AG04450 (cell line): ENCODE measurements at regions of chr2 and their contacts with region 1.

Region 1: DNA sequence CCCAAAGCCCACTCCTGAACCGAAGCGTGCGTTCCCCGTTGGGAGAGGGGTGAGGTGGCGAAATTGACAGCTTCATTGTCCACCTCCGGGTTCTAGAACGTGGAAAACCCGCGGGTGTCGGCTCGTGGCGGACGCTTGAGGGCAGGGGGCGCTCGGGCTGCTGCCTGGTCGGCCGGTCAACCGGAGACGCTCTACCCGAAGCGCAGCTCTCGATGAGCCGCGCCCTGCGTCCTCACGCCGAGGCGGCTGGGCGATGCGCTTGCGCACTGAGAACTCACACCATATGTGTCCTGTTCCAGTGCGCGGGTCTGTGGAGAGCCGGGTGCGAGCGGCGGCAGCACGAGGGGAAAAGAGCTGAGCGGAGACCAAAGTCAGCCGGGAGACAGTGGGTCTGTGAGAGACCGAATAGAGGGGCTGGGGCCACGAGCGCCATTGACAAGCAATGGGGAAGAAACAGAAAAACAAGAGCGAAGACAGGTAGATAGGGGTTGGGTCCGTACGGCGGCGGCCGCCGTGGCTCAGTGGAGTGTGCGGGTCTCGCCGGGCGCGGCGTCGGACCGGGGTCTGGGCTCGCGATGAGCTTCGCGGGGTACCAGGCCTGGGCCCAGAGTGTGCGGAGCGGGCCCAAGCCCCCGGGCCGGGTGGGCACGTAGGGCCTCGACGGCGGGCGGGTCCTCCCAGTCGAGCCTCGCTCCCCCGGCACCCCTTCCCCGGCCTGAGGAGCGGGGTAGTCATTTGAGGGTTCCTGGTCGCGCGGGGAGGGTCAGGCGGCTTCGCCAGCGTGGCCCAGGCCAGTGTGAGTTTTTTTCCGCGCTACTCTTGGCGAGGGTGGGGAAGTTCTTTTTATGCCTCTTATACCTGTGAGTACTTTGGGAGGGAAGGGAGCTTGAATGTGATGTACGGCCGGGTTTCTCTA is at the start of gene EIF5B:
- DNase-seq: peak; percentile 93
- H3K4me3 ChIP-seq: peak within 1 kb of the TSS; percentile 98
- H3K27ac ChIP-seq: peak within 1 kb of the TSS; percentile 86
- H3K27me3 ChIP-seq: no peaks in the 10 kb centered on the region
- CTCF ChIP-seq: peak; percentile 76
- polyA plus RNA-seq, gene EIF5B: 18.7 and 25.2 TPM in 2 replicates

Region 2: GRCh38 chr2:99278793-99279291 is 58.5 kb before region 1 on chr2:
- CTCF ChIA-PET with region 1: interaction called, 3 read pairs
- POLR2A ChIA-PET with region 1: interaction called, 10 read pairs
- DNase-seq: peak; percentile 88
- H3K4me3 ChIP-seq: peak overlapping the region; percentile 14; the same call in 1 of the 2 replicates
- H3K27ac ChIP-seq: peak overlapping the region; percentile 33
- H3K27me3 ChIP-seq: peaks cover 5% of the 10 kb centered on the region
- CTCF ChIP-seq: no peak

Region 3: DNA sequence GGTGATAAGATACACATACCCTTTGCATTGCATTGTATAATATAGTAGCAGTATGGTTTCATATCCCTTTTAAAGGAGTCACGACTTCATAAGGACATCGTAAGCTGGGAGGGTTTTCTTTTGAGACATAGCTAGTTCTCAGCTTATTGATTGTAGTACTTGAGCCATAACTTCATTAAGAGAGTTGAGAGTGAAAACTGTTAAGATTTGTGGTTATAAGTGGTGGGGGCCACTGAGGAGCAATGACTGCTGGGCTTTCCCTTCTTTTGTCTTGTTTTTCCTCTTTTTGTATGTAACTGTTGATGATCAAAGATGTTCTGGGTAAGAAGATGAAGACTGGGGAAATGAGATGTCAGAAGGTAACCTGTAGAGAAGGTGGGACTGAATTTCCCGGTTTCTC is 10.8 kb after region 1 on chr2:
- CTCF ChIA-PET with region 1: interaction called, 12 read pairs
- POLR2A ChIA-PET with region 1: interaction called, 5 read pairs
- DNase-seq: no peak
- H3K4me3 ChIP-seq: no peak overlapping the region
- H3K27ac ChIP-seq: no peak overlapping the region
- H3K27me3 ChIP-seq: no peaks in the 10 kb centered on the region
- CTCF ChIP-seq: no peak

Region 4: DNA sequence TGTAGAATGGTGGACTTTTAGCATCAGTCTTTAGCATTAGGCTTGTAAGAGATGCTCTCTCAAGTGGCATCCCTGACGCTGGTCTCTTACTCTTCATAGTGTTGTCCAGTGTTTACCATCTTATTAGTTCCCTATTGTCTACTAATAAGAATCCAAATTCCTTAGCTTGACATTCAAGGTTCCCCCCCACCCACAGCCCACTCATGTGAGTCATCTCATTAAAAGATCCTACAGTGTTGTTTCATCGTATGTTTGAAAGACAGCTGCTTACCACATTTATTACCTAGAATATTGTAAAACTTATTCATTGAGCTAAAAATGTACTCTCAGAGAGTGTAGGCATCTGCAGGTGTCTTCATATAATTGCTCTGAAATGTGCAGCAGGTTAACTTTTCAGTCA is 28.3 kb after region 1 on chr2:
- CTCF ChIA-PET with region 1: interaction called, 10 read pairs
- POLR2A ChIA-PET with region 1: no interaction called
- DNase-seq: no peak
- H3K4me3 ChIP-seq: no peak overlapping the region
- H3K27ac ChIP-seq: no peak overlapping the region
- H3K27me3 ChIP-seq: no peaks in the 10 kb centered on the region
- CTCF ChIP-seq: no peak